CD4-positive, alpha-beta memory T cell (primary cell): ENCODE measurements at regions of chr1 and their contacts with region 1.

Region 1: GRCh38 chr1:206766251-206766856 is 4.2 kb upstream of the IL19 start:
- DNase-seq: peak; percentile 67 to 85 (median 74)
- H3K4me3 ChIP-seq: no peak overlapping the region
- H3K4me3 Mint-ChIP-seq: peak overlapping the region; percentile 61 to 82 (median 76)
- H3K27ac ChIP-seq: no peak overlapping the region
- H3K27ac Mint-ChIP-seq: peak overlapping the region; percentile 82 to 95 (median 91)
- H3K4me1 ChIP-seq: peaks cover 67% of the 10 kb centered on the region
- H3K4me1 Mint-ChIP-seq: peaks cover 48 to 72% (median 61%) of the 10 kb centered on the region in 4 donors
- H3K27me3 ChIP-seq: no peaks in the 10 kb centered on the region
- H3K27me3 Mint-ChIP-seq: no peaks in the 10 kb centered on the region

Region 2: DNA sequence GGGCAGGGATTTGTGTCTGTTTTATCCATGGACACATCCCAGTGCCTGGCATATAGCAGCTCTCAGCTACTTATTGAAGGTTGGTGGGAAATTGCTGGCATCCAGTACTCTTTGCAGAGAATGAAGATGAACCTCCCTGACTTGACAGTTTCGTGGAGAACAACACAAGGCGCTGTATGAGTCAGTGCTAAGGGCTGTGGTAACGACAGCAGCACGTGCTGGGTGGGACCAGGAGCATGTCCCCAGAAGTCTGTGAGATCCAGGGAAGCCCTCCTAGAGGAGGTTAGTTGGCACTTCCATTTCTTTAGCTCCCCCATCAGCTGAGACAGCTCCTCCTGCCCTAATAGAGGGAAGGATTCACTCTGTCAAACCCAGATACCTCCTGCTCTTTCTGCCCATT is 21.7 kb before region 1 on chr1:
- CTCF ChIA-PET with region 1: interaction called, 7 read pairs
- POLR2A ChIA-PET with region 1: interaction called, 12 read pairs
- intact Hi-C with region 1: loop called (anchors 2 kb)
- DNase-seq: peak in 1 of 5 donors; percentile 44
- H3K4me3 ChIP-seq: no peak overlapping the region
- H3K4me3 Mint-ChIP-seq: peak overlapping the region in 3 of 8 donors; percentile 31 to 60 (median 39)
- H3K27ac ChIP-seq: no peak overlapping the region
- H3K27ac Mint-ChIP-seq: peak overlapping the region in 5 of 7 donors; percentile 33 to 78 (median 48)
- H3K4me1 ChIP-seq: peaks cover 25% of the 10 kb centered on the region
- H3K4me1 Mint-ChIP-seq: peaks cover 20 to 64% (median 33%) of the 10 kb centered on the region in 4 donors
- H3K27me3 ChIP-seq: no peaks in the 10 kb centered on the region
- H3K27me3 Mint-ChIP-seq: no peaks in the 10 kb centered on the region

Region 3: DNA sequence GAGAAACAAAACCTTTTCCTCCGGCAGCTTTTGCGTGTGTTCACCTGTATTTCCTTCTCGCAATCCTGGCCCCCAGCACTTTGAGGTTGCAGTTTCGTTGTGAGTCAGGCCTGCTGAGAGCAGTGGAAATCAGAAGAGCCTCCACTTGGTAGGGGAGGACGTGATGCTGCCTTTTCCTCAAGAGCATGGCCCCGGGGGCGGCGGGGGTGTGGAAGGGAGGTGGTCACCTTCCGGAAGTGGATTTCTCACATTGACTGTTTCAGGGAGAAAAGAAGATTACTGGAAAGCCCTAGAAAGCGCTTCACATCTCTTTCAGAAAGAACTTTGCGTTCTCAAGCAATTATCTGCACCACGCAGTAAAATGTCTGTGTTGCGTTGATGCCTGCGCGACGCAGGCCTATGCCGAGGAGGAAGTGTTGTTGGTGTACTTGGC is 18.1 kb after region 1 on chr1:
- CTCF ChIA-PET with region 1: interaction called, 5 read pairs
- POLR2A ChIA-PET with region 1: interaction called, 110 read pairs
- intact Hi-C with region 1: loop called (anchors 2 kb)
- DNase-seq: peak; percentile 60 to 83 (median 63)
- H3K4me3 ChIP-seq: peak overlapping the region in 1 of 2 donors; percentile 16
- H3K4me3 Mint-ChIP-seq: peak overlapping the region; percentile 55 to 84 (median 70)
- H3K27ac ChIP-seq: peak overlapping the region; percentile 46
- H3K27ac Mint-ChIP-seq: peak overlapping the region; percentile 83 to 96 (median 93)
- H3K4me1 ChIP-seq: peaks cover 37% of the 10 kb centered on the region
- H3K4me1 Mint-ChIP-seq: peaks cover 37 to 60% (median 49%) of the 10 kb centered on the region in 4 donors
- H3K27me3 ChIP-seq: no peaks in the 10 kb centered on the region
- H3K27me3 Mint-ChIP-seq: no peaks in the 10 kb centered on the region

Region 4: GRCh38 chr1:206808615-206809014 is 42.3 kb after region 1 on chr1:
- CTCF ChIA-PET with region 1: interaction called, 6 read pairs
- POLR2A ChIA-PET with region 1: interaction called, 141 read pairs
- intact Hi-C with region 1: loop called (anchors 1 kb)
- DNase-seq: peak; percentile 61 to 68 (median 63)
- H3K4me3 ChIP-seq: no peak overlapping the region
- H3K4me3 Mint-ChIP-seq: no peak overlapping the region
- H3K27ac ChIP-seq: no peak overlapping the region
- H3K27ac Mint-ChIP-seq: peak overlapping the region in 6 of 7 donors; percentile 20 to 90 (median 83)
- H3K4me1 ChIP-seq: peaks cover 35% of the 10 kb centered on the region
- H3K4me1 Mint-ChIP-seq: peaks cover 24 to 56% (median 43%) of the 10 kb centered on the region in 4 donors
- H3K27me3 ChIP-seq: no peaks in the 10 kb centered on the region
- H3K27me3 Mint-ChIP-seq: no peaks in the 10 kb centered on the region

Region 5: GRCh38 chr1:207145401-207146058 is 379.2 kb after region 1 on chr1:
- CTCF ChIA-PET with region 1: no interaction called
- POLR2A ChIA-PET with region 1: no interaction called
- intact Hi-C with region 1: no loop called
- DNase-seq: no peak
- H3K4me3 ChIP-seq: no peak overlapping the region
- H3K4me3 Mint-ChIP-seq: no peak overlapping the region
- H3K27ac ChIP-seq: no peak overlapping the region
- H3K27ac Mint-ChIP-seq: no peak overlapping the region
- H3K4me1 ChIP-seq: no peaks in the 10 kb centered on the region
- H3K4me1 Mint-ChIP-seq: no peaks in the 10 kb centered on the region
- H3K27me3 ChIP-seq: no peaks in the 10 kb centered on the region
- H3K27me3 Mint-ChIP-seq: peaks cover 13 to 21% of the 10 kb centered on the region in 2 donors

Region 6: DNA sequence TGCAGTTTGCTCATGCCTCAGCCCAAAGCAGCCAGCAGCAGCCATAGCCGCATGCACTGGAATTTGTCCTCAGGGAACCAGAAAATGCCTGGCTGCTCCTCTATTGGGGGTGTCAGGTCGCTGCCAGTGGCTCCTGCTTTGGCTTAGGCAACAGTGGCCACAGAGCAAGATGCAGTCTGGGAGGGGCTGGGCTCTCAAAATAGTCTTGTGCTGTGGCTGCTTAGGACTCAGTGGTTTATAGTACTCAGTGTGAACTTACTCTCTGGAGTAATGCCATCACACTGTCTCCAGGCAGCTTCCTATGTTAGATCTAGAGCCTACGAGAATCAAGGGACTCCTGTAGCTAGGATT is 580.2 kb after region 1 on chr1:
- CTCF ChIA-PET with region 1: no interaction called
- POLR2A ChIA-PET with region 1: no interaction called
- intact Hi-C with region 1: no loop called
- DNase-seq: no peak
- H3K4me3 ChIP-seq: no peak overlapping the region
- H3K4me3 Mint-ChIP-seq: no peak overlapping the region
- H3K27ac ChIP-seq: no peak overlapping the region
- H3K27ac Mint-ChIP-seq: no peak overlapping the region
- H3K4me1 ChIP-seq: peaks cover 32% of the 10 kb centered on the region
- H3K4me1 Mint-ChIP-seq: peaks cover 55 to 79% (median 63%) of the 10 kb centered on the region in 4 donors
- H3K27me3 ChIP-seq: no peaks in the 10 kb centered on the region
- H3K27me3 Mint-ChIP-seq: no peaks in the 10 kb centered on the region